Body of pancreas (tissue), 4 donors: ENCODE measurements at regions of chr4 and their contacts with region 1.

Region 1: DNA sequence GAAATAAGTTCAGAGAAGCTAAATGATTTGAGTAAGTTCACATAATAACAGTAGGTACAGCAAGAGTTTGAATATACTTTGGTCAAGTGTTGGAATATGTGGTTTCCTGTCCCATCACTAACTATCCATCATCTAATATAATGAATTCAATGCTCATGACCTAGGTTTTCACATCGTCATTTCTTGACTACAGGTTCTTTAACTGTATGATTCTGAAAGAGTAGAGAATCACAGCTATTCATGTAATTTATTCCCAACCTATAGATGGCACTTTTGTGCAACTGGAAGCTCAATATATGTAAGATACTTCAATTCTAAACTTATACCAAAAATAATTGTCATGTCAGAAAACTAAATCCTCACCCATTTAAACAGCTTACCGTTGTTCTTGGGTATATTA is 53.1 kb downstream of the TIGD2 start:
- DNase-seq: no peak
- ATAC-seq: no peak
- H3K4me3 ChIP-seq: no peak overlapping the region
- H3K27ac ChIP-seq: no peak overlapping the region
- H3K4me1 ChIP-seq: no peaks in the 10 kb centered on the region
- H3K27me3 ChIP-seq: no peaks in the 10 kb centered on the region
- CTCF ChIP-seq: peak in 2 of 7 experiments; percentile 7 to 17
- POLR2A ChIP-seq: no peak

Region 2: GRCh38 chr4:89213062-89213701 is 48.8 kb after region 1 on chr4:
- intact Hi-C with region 1: loop called (anchors 10 kb)
- DNase-seq: peak in 1 of 4 donors; percentile 11
- ATAC-seq: peak; percentile 53
- H3K4me3 ChIP-seq: no peak overlapping the region
- H3K27ac ChIP-seq: no peak overlapping the region
- H3K4me1 ChIP-seq: peaks cover 6% of the 10 kb centered on the region
- H3K27me3 ChIP-seq: no peaks in the 10 kb centered on the region
- CTCF ChIP-seq: no peak
- POLR2A ChIP-seq: no peak